MCF 10A (cell line): ENCODE measurements at regions of chr7 and their contacts with region 1.

Region 1: DNA sequence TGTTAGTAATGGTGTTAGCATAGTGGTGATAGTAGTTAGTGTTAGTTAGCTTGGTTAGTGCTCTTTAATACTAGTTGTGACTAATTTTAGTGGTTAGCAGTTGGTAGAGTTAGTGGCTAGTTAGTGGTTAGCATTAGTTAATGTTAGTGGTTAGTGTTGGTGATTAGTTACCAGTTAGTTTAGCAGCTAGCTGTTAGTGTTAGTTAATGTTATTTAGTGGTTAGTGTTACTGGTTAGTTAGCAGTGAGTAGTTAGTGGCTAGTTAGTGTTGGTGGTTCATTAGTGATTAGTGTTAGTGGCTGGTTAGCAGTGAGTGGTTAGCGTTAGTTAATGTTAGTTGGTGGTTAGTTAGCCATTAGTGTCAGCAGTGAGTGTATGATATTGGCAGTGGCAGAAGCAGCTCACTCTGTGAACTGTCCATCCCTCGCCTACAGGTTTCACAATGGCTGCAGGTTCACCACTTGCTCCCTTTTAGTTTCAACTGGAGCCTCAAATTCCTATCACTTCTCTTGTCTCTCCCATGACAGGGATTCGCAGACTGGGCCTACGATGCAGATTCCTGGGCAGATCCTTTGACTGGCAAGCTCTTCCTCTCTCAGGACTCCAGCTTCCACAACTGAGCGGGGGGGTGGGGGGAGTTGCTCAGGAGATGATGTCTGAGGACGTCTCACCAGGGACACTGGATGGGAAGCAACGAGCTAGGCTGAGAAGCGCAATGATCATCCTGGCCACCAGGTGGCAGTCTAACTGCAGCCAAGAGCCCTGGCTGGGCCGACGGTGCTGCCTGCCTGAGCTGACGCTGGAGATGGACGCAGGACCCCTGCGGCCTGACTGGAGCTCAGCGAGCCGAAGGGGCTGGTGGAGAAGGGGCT is 19.5 kb downstream of the GHRHR start:
- DNase-seq: peak; percentile 75
- H3K4me3 Mint-ChIP-seq: no peak overlapping the region
- H3K27ac Mint-ChIP-seq: no peak overlapping the region
- H3K4me1 Mint-ChIP-seq: peaks cover 11% of the 10 kb centered on the region
- H3K27me3 Mint-ChIP-seq: peaks cover 66% of the 10 kb centered on the region
- CTCF ChIP-seq: peak; percentile 86

Region 2: GRCh38 chr7:30445770-30446169 is 537.5 kb before region 1 on chr7:
- CTCF ChIA-PET with region 1: no interaction called
- POLR2A ChIA-PET with region 1: no interaction called
- intact Hi-C with region 1: no loop called
- DNase-seq: no peak
- H3K4me3 Mint-ChIP-seq: no peak overlapping the region
- H3K27ac Mint-ChIP-seq: no peak overlapping the region
- H3K4me1 Mint-ChIP-seq: no peaks in the 10 kb centered on the region
- H3K27me3 Mint-ChIP-seq: no peaks in the 10 kb centered on the region
- CTCF ChIP-seq: no peak

Region 3: GRCh38 chr7:30635798-30636197 is 347.5 kb before region 1 on chr7:
- CTCF ChIA-PET with region 1: no interaction called
- POLR2A ChIA-PET with region 1: no interaction called
- intact Hi-C with region 1: no loop called
- DNase-seq: no peak
- H3K4me3 Mint-ChIP-seq: no peak overlapping the region
- H3K27ac Mint-ChIP-seq: no peak overlapping the region
- H3K4me1 Mint-ChIP-seq: no peaks in the 10 kb centered on the region
- H3K27me3 Mint-ChIP-seq: no peaks in the 10 kb centered on the region
- CTCF ChIP-seq: no peak

Region 4: DNA sequence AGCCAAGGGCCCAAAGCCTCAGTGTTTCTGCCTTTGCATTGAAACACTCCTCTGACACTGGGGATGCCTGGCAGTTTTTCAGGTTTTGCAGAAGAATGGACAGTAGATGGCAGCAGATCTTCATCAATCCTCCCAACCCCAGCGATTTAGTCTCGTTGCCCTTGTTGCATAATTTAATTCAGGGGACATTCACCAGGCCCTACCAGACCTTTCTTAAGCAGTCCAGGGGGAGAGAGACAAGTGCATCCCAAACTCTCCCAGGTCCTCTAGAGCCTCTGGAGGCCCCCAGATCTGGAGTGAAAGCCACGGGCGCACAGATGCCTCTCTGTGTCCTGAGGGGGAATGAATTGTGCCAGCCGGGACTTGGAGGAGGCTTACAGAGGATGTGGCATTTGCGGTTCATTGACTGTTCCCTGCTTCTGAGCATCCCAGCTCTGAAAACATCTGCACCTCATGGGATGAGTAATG is 182.5 kb before region 1 on chr7:
- CTCF ChIA-PET with region 1: interaction called, 27 read pairs
- POLR2A ChIA-PET with region 1: no interaction called
- intact Hi-C with region 1: loop called (anchors 1 kb)
- DNase-seq: peak; percentile 80
- H3K4me3 Mint-ChIP-seq: no peak overlapping the region
- H3K27ac Mint-ChIP-seq: no peak overlapping the region
- H3K4me1 Mint-ChIP-seq: peaks cover 43% of the 10 kb centered on the region
- H3K27me3 Mint-ChIP-seq: no peaks in the 10 kb centered on the region
- CTCF ChIP-seq: peak; percentile 80

Region 5: DNA sequence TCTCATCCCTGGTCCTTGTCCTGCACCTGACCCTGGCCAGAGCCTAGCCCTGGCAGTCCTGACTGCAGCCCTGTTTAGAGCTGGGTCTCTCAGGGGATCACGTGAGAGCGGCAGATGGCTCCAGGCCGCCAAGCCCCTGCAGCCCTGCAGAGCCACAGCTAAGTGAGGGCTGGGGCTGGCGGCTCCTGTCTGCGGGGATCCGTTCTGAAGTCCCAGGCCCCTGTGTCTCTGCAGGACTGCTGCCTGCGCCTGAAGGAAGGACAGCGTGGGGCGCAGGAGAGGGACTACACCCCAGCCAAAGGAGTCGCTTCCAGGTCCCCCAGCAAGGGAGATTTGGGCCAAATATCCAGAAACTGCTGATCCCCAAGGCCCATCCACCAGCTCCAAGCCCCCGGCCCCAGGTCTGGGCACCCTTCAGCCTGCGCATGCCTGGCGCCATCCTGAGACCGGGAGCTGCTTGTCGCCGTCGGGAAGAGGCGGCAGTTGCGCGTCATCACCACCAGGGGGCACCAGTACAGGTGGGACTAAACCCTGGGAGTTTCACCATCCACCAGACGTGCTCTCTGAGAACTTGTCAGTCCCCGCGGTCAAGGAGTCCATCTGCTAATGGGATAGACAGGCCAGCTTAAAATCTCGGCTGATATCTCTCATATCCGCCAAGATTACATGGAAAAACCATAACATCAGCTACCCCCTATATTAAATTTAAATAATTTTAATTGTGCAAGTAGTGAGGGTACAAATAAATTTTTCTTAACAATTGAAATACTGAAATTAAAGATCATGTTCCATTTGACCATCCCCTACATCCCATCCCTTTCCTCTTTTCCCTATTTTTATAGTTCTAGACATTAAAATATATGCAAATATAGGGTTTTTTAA is 44.6 kb before region 1 on chr7:
- CTCF ChIA-PET with region 1: interaction called, 13 read pairs
- POLR2A ChIA-PET with region 1: interaction called, 3 read pairs
- intact Hi-C with region 1: no loop called
- DNase-seq: peak; percentile 83
- H3K4me3 Mint-ChIP-seq: no peak overlapping the region
- H3K27ac Mint-ChIP-seq: no peak overlapping the region
- H3K4me1 Mint-ChIP-seq: no peaks in the 10 kb centered on the region
- H3K27me3 Mint-ChIP-seq: peaks cover 63% of the 10 kb centered on the region
- CTCF ChIP-seq: peak; percentile 93

Region 6: DNA sequence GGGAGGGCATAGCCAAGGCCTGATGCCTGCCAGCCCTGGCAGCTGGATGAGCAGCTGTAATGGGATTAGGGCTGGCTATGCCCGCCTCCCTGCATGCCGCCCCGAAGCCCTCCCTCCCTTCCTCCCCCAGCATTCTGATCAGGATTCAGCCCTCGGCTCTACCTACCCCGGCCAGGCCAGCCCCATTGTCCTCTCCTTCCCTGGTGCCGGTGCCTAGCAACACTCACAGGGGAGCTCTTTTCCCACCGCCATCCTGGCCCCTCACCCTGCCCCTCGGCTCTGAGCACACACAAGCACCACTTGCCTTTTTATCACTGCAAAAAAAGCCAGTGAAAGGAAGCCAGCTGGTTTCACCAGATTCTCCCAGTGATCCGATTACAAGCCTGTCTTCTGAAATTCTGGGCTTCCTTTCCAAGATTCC is 59.8 kb after region 1 on chr7:
- CTCF ChIA-PET with region 1: interaction called, 11 read pairs
- POLR2A ChIA-PET with region 1: no interaction called
- intact Hi-C with region 1: no loop called
- DNase-seq: no peak
- H3K4me3 Mint-ChIP-seq: no peak overlapping the region
- H3K27ac Mint-ChIP-seq: no peak overlapping the region
- H3K4me1 Mint-ChIP-seq: no peaks in the 10 kb centered on the region
- H3K27me3 Mint-ChIP-seq: peaks cover 66% of the 10 kb centered on the region
- CTCF ChIP-seq: no peak

Region 7: GRCh38 chr7:31114593-31115343 is 131.5 kb after region 1 on chr7:
- CTCF ChIA-PET with region 1: interaction called, 743 read pairs
- POLR2A ChIA-PET with region 1: interaction called, 3 read pairs
- intact Hi-C with region 1: loop called (anchors 2 kb)
- DNase-seq: peak; percentile 49
- H3K4me3 Mint-ChIP-seq: no peak overlapping the region
- H3K27ac Mint-ChIP-seq: no peak overlapping the region
- H3K4me1 Mint-ChIP-seq: no peaks in the 10 kb centered on the region
- H3K27me3 Mint-ChIP-seq: peaks cover 59% of the 10 kb centered on the region
- CTCF ChIP-seq: no peak

Region 8: DNA sequence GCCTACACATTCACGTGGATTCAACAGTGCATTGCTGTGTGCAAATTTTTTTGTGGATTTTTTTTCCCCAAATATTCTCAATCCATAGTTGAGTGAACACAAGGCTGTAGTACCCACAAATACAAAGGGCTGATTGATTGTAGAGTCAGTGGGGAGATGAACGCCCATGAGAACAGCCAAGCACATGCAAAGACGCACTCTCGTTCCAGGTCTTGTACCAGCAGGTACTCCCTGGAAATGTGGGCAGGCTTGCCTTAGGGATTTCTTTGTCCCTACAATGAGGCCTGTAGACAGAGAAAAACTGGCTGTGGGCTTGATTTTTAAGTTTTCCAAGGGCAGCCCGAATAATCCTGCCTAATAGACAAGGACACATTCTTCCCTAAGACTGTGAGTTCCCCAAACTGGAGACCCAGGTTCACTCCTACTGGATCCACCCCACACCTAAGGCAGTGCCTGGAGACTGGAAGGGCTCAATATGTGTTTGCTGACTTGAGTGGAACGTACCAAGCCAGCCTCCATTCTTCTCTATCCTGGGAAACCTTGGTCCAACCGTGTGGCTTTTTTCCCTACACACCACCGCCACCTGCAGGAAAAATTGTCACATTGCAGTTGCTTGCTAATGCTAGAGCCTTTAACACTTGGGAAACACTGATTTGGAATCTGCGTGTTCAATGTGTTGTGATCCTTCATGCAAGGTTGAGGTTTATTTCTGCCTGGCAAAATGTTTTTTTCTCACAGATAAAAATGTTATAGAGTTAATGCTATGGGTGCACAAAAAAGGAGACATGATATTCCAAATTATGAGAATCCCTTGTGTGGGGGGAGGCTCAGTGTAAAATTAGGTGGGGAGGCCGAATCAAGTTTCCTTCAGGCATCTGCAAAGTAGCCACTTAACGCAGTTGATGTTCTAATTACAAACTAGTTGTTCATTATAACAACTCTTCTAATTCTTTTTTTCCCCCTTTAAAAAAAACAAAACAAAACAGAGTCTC is 753.0 kb after region 1 on chr7:
- CTCF ChIA-PET with region 1: interaction called, 4 read pairs
- POLR2A ChIA-PET with region 1: no interaction called
- intact Hi-C with region 1: loop called (anchors 10 kb)
- DNase-seq: peak; percentile 81
- H3K4me3 Mint-ChIP-seq: no peak overlapping the region
- H3K27ac Mint-ChIP-seq: no peak overlapping the region
- H3K4me1 Mint-ChIP-seq: peaks cover 6% of the 10 kb centered on the region
- H3K27me3 Mint-ChIP-seq: peaks cover 24% of the 10 kb centered on the region
- CTCF ChIP-seq: peak; percentile 86